Activated T-helper 2 cell treated with anti-CD3 and anti-CD28 coated beads, Interferon-gamma antibody, Interleukin-2, Interleukin-4, amounts not matched to agents 10 μg/mL and 5 μg/mL and 100 μg/mL, durations not matched to agents 14 hours and 24 hours and 36 hours (primary cell): ENCODE measurements at regions of chr1 and their contacts with region 1.

Region 1: DNA sequence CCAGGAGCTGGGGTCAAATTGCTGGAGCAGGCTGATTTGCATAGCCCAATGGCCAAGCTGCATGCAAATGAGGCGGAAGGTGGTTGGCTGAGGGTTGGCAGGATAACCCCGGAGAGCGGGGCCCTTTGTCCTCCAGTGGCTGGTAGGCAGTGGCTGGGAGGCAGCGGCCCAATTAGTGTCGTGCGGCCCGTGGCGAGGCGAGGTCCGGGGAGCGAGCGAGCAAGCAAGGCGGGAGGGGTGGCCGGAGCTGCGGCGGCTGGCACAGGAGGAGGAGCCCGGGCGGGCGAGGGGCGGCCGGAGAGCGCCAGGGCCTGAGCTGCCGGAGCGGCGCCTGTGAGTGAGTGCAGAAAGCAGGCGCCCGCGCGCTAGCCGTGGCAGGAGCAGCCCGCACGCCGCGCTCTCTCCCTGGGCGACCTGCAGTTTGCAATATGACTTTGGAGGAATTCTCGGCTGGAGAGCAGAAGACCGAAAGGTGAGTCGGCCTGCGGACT is at the start of gene GADD45A:
- DNase-seq: peak; percentile 96
- H3K4me3 Mint-ChIP-seq: peak within 1 kb of the TSS; percentile 98
- H3K27ac Mint-ChIP-seq: peak within 1 kb of the TSS; percentile 99
- H3K4me1 Mint-ChIP-seq: peaks cover 39% of the 10 kb centered on the region
- H3K27me3 Mint-ChIP-seq: no peaks in the 10 kb centered on the region
- total RNA-seq, gene GADD45A: 30.3 and 33.5 TPM in 2 replicates

Region 2: GRCh38 chr1:67174716-67175284 is 510.3 kb before region 1 on chr1:
- intact Hi-C with region 1: loop called (anchors 1 kb)
- DNase-seq: no peak
- H3K4me3 Mint-ChIP-seq: no peak overlapping the region
- H3K27ac Mint-ChIP-seq: peak overlapping the region; percentile 63
- H3K4me1 Mint-ChIP-seq: peaks cover 49% of the 10 kb centered on the region
- H3K27me3 Mint-ChIP-seq: peaks cover 4% of the 10 kb centered on the region

Region 3: GRCh38 chr1:67339623-67340343 is 345.3 kb before region 1 on chr1:
- intact Hi-C with region 1: loop called (anchors 2 kb)
- DNase-seq: no peak
- H3K4me3 Mint-ChIP-seq: no peak overlapping the region
- H3K27ac Mint-ChIP-seq: peak overlapping the region; percentile 89
- H3K4me1 Mint-ChIP-seq: peaks cover 78% of the 10 kb centered on the region
- H3K27me3 Mint-ChIP-seq: no peaks in the 10 kb centered on the region

Region 4: DNA sequence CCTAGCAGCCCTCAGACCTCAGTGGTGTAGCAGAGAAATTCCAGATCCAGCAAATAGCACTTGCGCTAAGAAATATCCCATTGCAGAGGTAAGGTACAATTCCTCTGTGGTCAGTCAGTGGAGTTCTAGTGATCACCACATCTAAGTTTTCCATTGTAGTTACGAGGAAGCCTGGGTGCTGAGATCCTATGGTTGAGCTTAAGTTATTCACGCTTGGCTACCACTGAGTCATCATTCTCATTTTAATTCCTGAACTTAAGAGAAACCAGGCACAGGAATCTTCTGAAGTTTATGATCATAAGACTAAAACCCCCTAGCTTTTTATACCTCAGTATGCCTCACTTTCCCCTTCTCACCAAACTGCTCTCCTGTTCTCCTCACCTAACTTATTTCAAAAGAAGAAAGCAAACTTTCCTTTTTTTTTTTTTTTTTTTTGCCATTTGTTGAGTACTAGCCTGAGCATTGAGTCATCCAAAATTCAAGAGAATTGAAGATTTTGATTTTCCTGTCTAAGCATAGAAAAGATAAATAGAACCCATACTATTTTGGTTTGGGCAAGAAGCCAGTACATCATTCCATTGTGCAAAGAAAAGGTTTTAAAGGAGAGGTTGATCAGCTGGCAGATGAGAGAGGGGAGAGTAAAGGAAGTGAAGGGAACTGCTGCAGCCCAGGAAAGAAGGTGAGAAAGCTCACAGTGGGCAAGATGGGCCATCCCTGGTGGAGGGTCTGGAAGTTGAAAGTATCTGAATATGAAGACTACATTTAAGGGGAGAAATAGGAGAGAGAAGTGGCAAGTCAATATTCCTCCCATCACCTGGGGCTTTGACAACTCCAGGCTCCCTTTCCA is 294.8 kb before region 1 on chr1:
- intact Hi-C with region 1: no loop called
- DNase-seq: no peak
- H3K4me3 Mint-ChIP-seq: no peak overlapping the region
- H3K27ac Mint-ChIP-seq: peak overlapping the region; percentile 17
- H3K4me1 Mint-ChIP-seq: peaks cover 3% of the 10 kb centered on the region
- H3K27me3 Mint-ChIP-seq: no peaks in the 10 kb centered on the region

Region 5: DNA sequence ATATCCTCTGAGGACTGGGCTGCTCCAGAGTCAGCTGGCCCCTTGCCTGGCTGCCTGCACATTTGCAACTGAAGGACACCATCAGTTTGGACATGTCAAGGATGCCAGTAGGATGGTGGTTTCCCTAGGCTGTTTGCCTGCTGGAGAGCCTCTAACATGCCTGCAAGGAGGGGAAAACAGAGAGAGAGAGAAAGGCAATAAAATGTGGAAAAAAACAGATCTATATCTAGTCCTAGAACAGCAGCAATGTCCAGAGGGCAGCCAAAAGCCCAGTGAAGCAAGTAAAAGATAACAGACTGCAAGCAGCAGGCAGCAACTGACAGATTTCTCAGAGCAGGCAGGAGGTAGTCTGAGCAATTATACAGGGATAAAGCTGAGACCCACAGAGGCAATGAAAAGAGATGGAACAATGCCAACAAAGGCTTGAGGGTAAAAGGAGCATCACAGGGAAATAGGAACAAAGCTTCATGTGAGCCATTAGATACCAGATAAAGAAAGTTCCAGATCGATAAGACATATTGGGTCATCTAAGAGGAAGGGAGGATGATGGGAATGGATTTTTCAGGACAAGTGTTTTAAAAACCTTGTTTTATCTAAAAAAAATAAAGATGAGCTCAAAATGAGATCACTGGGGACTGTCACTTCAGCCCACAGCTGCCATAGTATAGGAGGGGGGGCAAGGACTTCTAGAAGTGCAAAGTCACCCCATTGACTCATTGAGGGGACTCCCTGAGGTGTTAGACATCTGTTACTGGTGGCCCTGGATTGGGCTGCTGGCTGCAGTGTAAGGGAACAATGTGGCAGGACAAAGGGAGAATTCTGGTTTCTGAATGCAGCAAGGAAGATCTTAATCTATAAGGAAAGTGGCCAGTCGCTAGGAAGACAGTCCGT is 38.7 kb before region 1 on chr1:
- intact Hi-C with region 1: loop called (anchors 5 kb)
- DNase-seq: no peak
- H3K4me3 Mint-ChIP-seq: no peak overlapping the region
- H3K27ac Mint-ChIP-seq: no peak overlapping the region
- H3K4me1 Mint-ChIP-seq: no peaks in the 10 kb centered on the region
- H3K27me3 Mint-ChIP-seq: peaks cover 3% of the 10 kb centered on the region

Region 6: GRCh38 chr1:67723620-67724019 is 38.5 kb after region 1 on chr1:
- intact Hi-C with region 1: loop called (anchors 5 kb)
- DNase-seq: no peak
- H3K4me3 Mint-ChIP-seq: no peak overlapping the region
- H3K27ac Mint-ChIP-seq: no peak overlapping the region
- H3K4me1 Mint-ChIP-seq: peaks cover 5% of the 10 kb centered on the region
- H3K27me3 Mint-ChIP-seq: peaks cover 5% of the 10 kb centered on the region